ENCODE measurements at regions of chr1 and their contacts with region 1.

Region 1: DNA sequence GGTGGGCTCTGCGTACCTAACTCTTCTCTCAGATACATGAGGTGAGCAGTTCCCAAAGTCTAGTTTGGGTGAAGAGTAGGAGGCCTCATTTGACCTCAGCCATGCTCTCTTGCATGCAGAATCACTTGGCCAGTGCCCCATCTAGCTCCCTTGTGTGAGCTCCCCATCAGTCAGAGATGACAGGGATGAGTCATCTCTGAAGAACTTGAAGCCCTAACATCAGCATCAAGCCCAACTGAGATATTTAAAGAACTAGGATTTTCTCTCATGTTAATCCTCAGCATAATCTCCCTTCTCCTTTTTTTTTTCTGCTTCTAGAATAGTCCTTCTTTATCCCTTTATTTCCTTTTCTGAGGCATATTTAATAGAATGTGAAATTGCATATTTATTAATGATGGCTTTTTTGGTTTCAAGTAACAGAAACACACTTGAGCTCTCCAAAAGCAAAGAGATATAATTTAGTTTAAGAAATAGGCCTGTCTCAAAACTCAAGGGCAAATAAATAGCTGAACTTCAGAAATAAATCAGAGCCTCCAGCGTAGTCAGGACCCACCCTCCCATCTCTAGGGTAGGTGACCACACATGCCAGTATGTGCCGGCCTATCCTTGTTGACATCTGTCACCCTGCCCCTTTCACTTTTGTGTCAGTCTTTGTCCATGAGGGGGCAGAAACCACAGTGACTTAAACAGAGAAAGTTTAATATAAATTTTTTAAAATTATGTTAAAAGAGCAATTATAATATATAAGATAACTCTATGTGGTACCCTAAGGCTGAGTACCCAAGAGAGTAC is 112.3 kb downstream of the TSEN15 start:
- DNase-seq: peak in 3 of 5 donors; percentile 20 to 54 (median 34)
- ATAC-seq: peak; percentile 51 to 74 (median 58)
- H3K4me3 ChIP-seq: no peak overlapping the region
- H3K27ac ChIP-seq: peak overlapping the region in 3 of 12 donors; percentile 1 to 66 (median 37)
- H3K4me1 ChIP-seq: peaks cover 0 to 76% (median 17%) of the 10 kb centered on the region in 12 donors
- H3K27me3 ChIP-seq: no peaks in the 10 kb centered on the region
- CTCF ChIP-seq: no peak
- POLR2A ChIP-seq: no peak

Region 2: DNA sequence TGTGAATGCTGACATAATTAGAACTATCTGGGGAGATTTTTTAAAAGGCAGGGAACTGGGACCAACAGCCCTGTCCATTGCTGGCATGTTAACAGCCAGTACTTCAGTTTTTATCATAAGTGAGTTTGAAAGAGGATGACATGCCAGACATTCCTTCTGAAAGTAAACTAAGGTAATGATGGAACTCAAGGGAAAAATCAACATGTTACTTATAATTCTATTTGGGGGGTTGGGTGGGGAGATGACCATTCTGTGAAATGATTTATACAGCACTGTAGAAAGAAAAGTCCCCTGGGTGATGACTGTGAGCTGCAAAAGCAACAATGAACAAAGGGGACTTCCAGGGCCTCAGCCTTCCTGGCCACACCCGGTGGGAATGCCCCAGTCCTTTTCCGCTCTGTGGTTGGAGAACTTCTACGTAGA is 983.2 kb before region 1 on chr1:
- intact Hi-C with region 1: no loop called
- DNase-seq: peak; percentile 61 to 82 (median 70)
- ATAC-seq: peak; percentile 80 to 93 (median 91)
- H3K4me3 ChIP-seq: peak overlapping the region in 2 of 12 donors; percentile 3 to 9
- H3K27ac ChIP-seq: peak overlapping the region; percentile 33 to 82 (median 73)
- H3K4me1 ChIP-seq: peaks cover 3 to 34% (median 20%) of the 10 kb centered on the region in 12 donors
- H3K27me3 ChIP-seq: peaks cover 0 to 2% (median 0%) of the 10 kb centered on the region in 9 donors
- CTCF ChIP-seq: no peak
- POLR2A ChIP-seq: no peak

Region 3: DNA sequence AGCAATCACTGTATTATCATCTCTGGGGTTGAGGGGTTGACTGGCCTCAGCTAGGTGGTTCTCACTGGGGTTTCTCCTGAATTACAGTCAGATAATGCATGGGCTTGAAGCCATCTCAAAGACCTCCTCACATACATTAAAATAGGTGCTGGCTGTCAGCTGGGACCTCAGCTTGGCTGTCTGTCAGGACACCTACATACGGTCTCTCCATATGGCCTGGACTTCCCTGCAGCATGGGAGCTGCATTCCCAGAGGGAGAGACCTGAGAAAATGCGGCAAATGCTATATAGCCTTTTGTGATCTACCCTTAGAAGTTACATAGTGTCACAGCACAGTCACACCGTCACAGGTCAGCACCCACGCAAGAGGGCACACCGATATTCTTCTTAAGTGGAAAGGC is 18.8 kb before region 1 on chr1:
- intact Hi-C with region 1: loop called in 1 of 10 experiments (anchors 2 kb)
- DNase-seq: no peak
- ATAC-seq: no peak
- H3K4me3 ChIP-seq: no peak overlapping the region
- H3K27ac ChIP-seq: no peak overlapping the region
- H3K4me1 ChIP-seq: peaks cover 0 to 14% (median 2%) of the 10 kb centered on the region in 12 donors
- H3K27me3 ChIP-seq: no peaks in the 10 kb centered on the region
- CTCF ChIP-seq: no peak
- POLR2A ChIP-seq: no peak

Region 4: GRCh38 chr1:184215274-184215925 is 51.5 kb after region 1 on chr1:
- intact Hi-C with region 1: loop called in 1 of 10 experiments (anchors 5 kb)
- DNase-seq: no peak
- ATAC-seq: no peak
- H3K4me3 ChIP-seq: no peak overlapping the region
- H3K27ac ChIP-seq: no peak overlapping the region
- H3K4me1 ChIP-seq: peaks cover 0 to 12% (median 0%) of the 10 kb centered on the region in 12 donors
- H3K27me3 ChIP-seq: no peaks in the 10 kb centered on the region
- CTCF ChIP-seq: no peak
- POLR2A ChIP-seq: no peak

Measured in heart left ventricle (tissue), 16 donors.